B cell (primary cell): ENCODE measurements at regions of chr1 and their contacts with region 1.

Region 1: DNA sequence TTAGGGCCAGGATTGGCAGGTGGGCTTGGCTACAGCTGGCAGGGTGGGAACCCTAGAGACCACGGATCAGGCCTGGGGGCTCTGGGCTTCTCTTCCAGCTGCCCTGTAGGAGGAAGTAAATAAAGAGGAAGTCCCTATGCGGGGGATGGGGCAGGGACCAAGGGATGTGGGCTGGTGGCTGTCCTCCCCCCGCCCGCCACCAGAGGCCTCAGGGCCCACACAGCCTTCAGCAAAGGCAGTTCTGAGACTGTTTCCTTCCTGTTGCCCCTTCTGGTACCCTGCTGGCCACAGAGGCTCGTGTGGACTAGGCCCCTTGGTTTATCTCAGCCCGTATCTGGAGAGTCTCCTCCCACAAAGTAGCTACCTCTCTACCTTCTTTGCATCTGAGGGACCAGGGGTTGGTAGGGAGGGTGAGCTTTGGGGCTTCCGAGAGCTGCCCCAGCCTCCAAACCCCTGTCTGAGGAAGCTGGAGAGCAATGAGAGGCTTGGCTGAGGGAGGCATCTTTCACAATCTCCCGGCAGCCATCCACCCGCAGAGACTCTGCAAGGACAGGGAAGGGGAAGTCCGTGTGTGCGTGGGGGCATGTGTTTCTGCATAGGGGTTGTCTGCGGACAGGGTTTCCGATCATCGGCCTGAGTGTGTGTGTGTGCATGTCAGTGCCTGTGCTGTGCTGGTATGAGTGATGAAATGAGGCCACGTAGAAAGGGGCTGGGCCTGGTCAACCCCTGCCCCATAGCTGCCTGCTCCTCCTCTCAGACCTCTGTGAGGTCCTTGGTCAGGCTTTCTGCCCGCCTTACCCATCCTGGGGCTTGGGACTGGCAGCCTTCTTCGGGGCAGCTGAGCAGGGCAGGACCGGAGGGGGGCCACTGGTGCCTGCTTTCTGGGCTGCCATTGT is 12.5 kb downstream of the RPS6KA1 start:
- DNase-seq: peak; percentile 93
- ATAC-seq: peak; percentile 62
- H3K4me3 ChIP-seq: peak overlapping the region; percentile 38 to 70 (median 51)
- H3K4me3 Mint-ChIP-seq: peak overlapping the region; percentile 90
- H3K27ac ChIP-seq: peak overlapping the region; percentile 87 to 92
- H3K27ac Mint-ChIP-seq: peak overlapping the region; percentile 99
- H3K4me1 ChIP-seq: peaks cover 87 to 95% of the 10 kb centered on the region in 2 donors
- H3K4me1 Mint-ChIP-seq: peaks cover 86% of the 10 kb centered on the region
- H3K27me3 ChIP-seq: no peaks in the 10 kb centered on the region
- H3K27me3 Mint-ChIP-seq: no peaks in the 10 kb centered on the region
- CTCF ChIP-seq: peak; percentile 78

Region 2: DNA sequence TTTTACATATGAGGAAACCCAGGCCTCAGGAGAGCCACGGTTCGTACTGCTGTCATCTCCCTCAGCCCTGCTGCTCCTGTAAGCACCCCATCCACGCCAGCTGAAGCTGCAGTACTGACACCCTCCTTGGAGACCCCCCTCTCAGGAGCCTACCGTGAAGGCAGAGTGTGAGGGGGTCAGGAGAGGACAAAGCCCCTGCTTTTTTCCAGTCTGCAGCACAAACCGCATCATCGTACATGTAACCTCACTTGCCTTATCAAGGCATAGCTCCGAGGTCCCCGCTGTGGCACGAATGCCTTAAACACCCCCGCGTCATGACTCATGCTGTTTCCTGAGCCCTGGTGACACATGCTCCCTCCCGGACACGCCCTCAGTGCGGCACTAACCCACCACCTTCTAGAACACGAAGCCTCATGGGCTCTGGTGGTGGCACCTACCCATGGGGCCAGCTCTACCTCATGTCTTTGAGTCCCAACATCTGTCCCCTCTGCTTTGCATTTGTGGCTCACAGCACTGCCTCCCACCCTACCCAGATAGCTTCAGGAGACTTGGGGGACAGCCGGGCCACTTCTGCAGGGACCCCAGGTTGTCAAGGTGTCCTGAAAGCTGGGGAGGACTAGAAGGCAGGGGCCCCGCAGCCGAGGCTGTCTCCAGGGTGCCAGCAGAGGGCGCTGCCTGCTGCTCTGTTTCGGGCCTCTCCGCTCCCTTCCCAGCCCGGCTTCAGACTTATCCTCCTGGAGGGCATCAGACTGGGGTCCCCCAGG is 257.3 kb before region 1 on chr1:
- CTCF ChIA-PET with region 1: no interaction called
- POLR2A ChIA-PET with region 1: no interaction called
- intact Hi-C with region 1: loop called (anchors 1 kb)
- DNase-seq: peak; percentile 87
- ATAC-seq: peak; percentile 47
- H3K4me3 ChIP-seq: peak overlapping the region in 2 of 5 experiments; percentile 5 to 19
- H3K4me3 Mint-ChIP-seq: peak overlapping the region; percentile 87
- H3K27ac ChIP-seq: peak overlapping the region; percentile 93 to 96
- H3K27ac Mint-ChIP-seq: peak overlapping the region; percentile 97
- H3K4me1 ChIP-seq: peaks cover 79 to 89% of the 10 kb centered on the region in 2 donors
- H3K4me1 Mint-ChIP-seq: peaks cover 88% of the 10 kb centered on the region
- H3K27me3 ChIP-seq: no peaks in the 10 kb centered on the region
- H3K27me3 Mint-ChIP-seq: no peaks in the 10 kb centered on the region
- CTCF ChIP-seq: peak; percentile 77

Region 3: DNA sequence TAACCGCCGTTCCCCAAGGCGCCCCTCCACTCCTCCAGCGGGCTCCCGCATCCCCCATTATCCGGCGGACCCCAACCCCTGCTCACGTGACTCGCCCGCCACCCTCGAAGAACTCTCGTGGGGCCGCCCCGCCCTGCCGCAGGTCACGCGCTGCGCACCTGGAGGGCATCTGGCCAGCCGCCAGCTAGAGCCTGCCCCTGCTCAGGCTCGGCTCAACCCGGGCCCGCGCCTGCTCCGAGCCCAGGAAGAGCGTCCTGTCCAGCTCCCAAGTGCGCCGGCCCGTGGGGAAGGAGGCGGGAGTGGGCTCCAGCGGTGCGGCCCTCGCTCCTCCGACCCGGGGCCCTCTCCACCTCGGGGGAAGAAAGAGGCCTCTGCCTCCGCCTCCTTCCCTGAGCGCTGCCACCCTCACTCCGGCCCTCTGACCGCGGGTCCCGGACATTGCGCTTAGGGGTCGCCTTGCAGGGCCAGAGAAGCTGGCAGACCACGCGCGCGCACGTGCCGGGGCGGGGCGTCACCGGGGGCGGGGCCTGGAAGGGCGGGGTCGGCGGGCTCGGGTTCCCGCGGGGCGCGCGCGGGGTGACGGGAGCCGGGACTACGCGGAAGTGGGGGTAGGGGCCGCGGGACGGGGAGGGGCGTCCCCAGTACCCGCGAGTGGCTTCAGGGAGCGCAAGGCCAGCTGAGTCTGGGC is 41.4 kb before region 1 on chr1:
- CTCF ChIA-PET with region 1: interaction called, 39 read pairs
- POLR2A ChIA-PET with region 1: interaction called, 32 read pairs
- intact Hi-C with region 1: loop called (anchors 1 kb)
- DNase-seq: peak; percentile 96
- ATAC-seq: peak; percentile 75
- H3K4me3 ChIP-seq: peak overlapping the region in 4 of 5 experiments; percentile 74 to 93 (median 88)
- H3K4me3 Mint-ChIP-seq: peak overlapping the region; percentile 91
- H3K27ac ChIP-seq: peak overlapping the region; percentile 100
- H3K27ac Mint-ChIP-seq: peak overlapping the region; percentile 98
- H3K4me1 ChIP-seq: peaks cover 7 to 19% of the 10 kb centered on the region in 2 donors
- H3K4me1 Mint-ChIP-seq: peaks cover 8% of the 10 kb centered on the region
- H3K27me3 ChIP-seq: no peaks in the 10 kb centered on the region
- H3K27me3 Mint-ChIP-seq: no peaks in the 10 kb centered on the region
- CTCF ChIP-seq: peak; percentile 44

Region 4: GRCh38 chr1:26529655-26530409 is 12.2 kb before region 1 on chr1 and contains the start of gene RPS6KA1:
- CTCF ChIA-PET with region 1: interaction called, 12 read pairs
- POLR2A ChIA-PET with region 1: interaction called, 19 read pairs
- intact Hi-C with region 1: loop called (anchors 1 kb)
- DNase-seq: peak; percentile 78
- ATAC-seq: peak; percentile 93
- H3K4me3 ChIP-seq: peak within 1 kb of the TSS; percentile 60 to 80 (median 68)
- H3K4me3 Mint-ChIP-seq: peak within 1 kb of the TSS; percentile 90
- H3K27ac ChIP-seq: peak within 1 kb of the TSS in 1 of 2 donors; percentile 49
- H3K27ac Mint-ChIP-seq: peak within 1 kb of the TSS; percentile 86
- H3K4me1 ChIP-seq: peaks cover 24 to 33% of the 10 kb centered on the region in 2 donors
- H3K4me1 Mint-ChIP-seq: peaks cover 35% of the 10 kb centered on the region
- H3K27me3 ChIP-seq: no peaks in the 10 kb centered on the region
- H3K27me3 Mint-ChIP-seq: peaks cover 1% of the 10 kb centered on the region
- CTCF ChIP-seq: no peak
- total RNA-seq, gene RPS6KA1: 99.9 and 109 TPM in 2 replicates

Region 5: DNA sequence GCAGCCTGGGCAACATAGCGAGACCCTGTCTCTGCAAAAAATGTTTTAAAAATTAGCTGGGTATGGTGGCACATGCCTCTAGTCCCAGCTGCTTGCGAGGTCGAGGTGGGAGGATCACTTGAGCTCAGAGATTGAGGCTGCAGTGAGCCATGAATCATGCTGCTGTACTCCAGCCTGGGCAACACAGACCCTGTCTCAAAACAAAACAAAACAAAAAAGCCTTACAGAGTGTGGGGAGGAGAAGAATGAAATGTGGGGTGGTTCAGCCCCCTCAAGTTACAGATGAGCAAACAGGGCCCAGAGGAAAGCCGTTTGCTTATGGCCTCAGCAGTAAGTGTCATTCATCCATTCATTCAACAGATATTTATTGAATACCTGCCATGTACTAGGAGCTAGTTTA is 28.2 kb after region 1 on chr1:
- CTCF ChIA-PET with region 1: interaction called, 10 read pairs
- POLR2A ChIA-PET with region 1: interaction called, 4 read pairs
- intact Hi-C with region 1: no loop called
- DNase-seq: no peak
- ATAC-seq: no peak
- H3K4me3 ChIP-seq: no peak overlapping the region
- H3K4me3 Mint-ChIP-seq: no peak overlapping the region
- H3K27ac ChIP-seq: no peak overlapping the region
- H3K27ac Mint-ChIP-seq: peak overlapping the region; percentile 20
- H3K4me1 ChIP-seq: no peaks in the 10 kb centered on the region
- H3K4me1 Mint-ChIP-seq: no peaks in the 10 kb centered on the region
- H3K27me3 ChIP-seq: no peaks in the 10 kb centered on the region
- H3K27me3 Mint-ChIP-seq: no peaks in the 10 kb centered on the region
- CTCF ChIP-seq: no peak

Region 6: GRCh38 chr1:26695356-26696118 is 153.5 kb after region 1 on chr1 and contains the start of gene ARID1A:
- CTCF ChIA-PET with region 1: interaction called, 7 read pairs
- POLR2A ChIA-PET with region 1: interaction called, 10 read pairs
- intact Hi-C with region 1: loop called (anchors 5 kb)
- DNase-seq: peak; percentile 99
- ATAC-seq: peak; percentile 62
- H3K4me3 ChIP-seq: peak within 1 kb of the TSS; percentile 22 to 84 (median 73)
- H3K4me3 Mint-ChIP-seq: peak within 1 kb of the TSS; percentile 91
- H3K27ac ChIP-seq: peak within 1 kb of the TSS; percentile 67 to 93
- H3K27ac Mint-ChIP-seq: peak within 1 kb of the TSS; percentile 93
- H3K4me1 ChIP-seq: peaks cover 46 to 48% of the 10 kb centered on the region in 2 donors
- H3K4me1 Mint-ChIP-seq: peaks cover 30% of the 10 kb centered on the region
- H3K27me3 ChIP-seq: no peaks in the 10 kb centered on the region
- H3K27me3 Mint-ChIP-seq: no peaks in the 10 kb centered on the region
- CTCF ChIP-seq: no peak
- total RNA-seq, gene ARID1A: 150 and 152 TPM in 2 replicates

Region 7: GRCh38 chr1:26744075-26744959 is 202.3 kb after region 1 on chr1:
- CTCF ChIA-PET with region 1: interaction called, 3 read pairs
- POLR2A ChIA-PET with region 1: no interaction called
- intact Hi-C with region 1: loop called (anchors 5 kb)
- DNase-seq: peak; percentile 88
- ATAC-seq: peak; percentile 95
- H3K4me3 ChIP-seq: peak overlapping the region; percentile 7 to 51 (median 39)
- H3K4me3 Mint-ChIP-seq: peak overlapping the region; percentile 80
- H3K27ac ChIP-seq: peak overlapping the region; percentile 75 to 96
- H3K27ac Mint-ChIP-seq: peak overlapping the region; percentile 92
- H3K4me1 ChIP-seq: peaks cover 82 to 88% of the 10 kb centered on the region in 2 donors
- H3K4me1 Mint-ChIP-seq: peaks cover 83% of the 10 kb centered on the region
- H3K27me3 ChIP-seq: no peaks in the 10 kb centered on the region
- H3K27me3 Mint-ChIP-seq: no peaks in the 10 kb centered on the region
- CTCF ChIP-seq: no peak